Activated CD4-positive, alpha-beta T cell treated with anti-CD3 and anti-CD28 coated beads, Interleukin-2, amount 10 ng/mL, durations not matched to agents 7 days and 5 days (primary cell): ENCODE measurements at regions of chr14 and their contacts with region 1.

Region 1: GRCh38 chr14:34035177-34035933 is 84.5 kb upstream of the EGLN3 start:
- DNase-seq: no peak
- H3K4me3 Mint-ChIP-seq: no peak overlapping the region
- H3K27ac Mint-ChIP-seq: no peak overlapping the region
- H3K4me1 Mint-ChIP-seq: peaks cover 39% of the 10 kb centered on the region
- H3K27me3 Mint-ChIP-seq: peaks cover 25% of the 10 kb centered on the region

Region 2: GRCh38 chr14:33754265-33754664 is 281.1 kb before region 1 on chr14:
- CTCF ChIA-PET with region 1: no interaction called
- POLR2A ChIA-PET with region 1: no interaction called
- DNase-seq: no peak
- H3K4me3 Mint-ChIP-seq: no peak overlapping the region
- H3K27ac Mint-ChIP-seq: no peak overlapping the region
- H3K4me1 Mint-ChIP-seq: no peaks in the 10 kb centered on the region
- H3K27me3 Mint-ChIP-seq: peaks cover 6% of the 10 kb centered on the region

Region 3: DNA sequence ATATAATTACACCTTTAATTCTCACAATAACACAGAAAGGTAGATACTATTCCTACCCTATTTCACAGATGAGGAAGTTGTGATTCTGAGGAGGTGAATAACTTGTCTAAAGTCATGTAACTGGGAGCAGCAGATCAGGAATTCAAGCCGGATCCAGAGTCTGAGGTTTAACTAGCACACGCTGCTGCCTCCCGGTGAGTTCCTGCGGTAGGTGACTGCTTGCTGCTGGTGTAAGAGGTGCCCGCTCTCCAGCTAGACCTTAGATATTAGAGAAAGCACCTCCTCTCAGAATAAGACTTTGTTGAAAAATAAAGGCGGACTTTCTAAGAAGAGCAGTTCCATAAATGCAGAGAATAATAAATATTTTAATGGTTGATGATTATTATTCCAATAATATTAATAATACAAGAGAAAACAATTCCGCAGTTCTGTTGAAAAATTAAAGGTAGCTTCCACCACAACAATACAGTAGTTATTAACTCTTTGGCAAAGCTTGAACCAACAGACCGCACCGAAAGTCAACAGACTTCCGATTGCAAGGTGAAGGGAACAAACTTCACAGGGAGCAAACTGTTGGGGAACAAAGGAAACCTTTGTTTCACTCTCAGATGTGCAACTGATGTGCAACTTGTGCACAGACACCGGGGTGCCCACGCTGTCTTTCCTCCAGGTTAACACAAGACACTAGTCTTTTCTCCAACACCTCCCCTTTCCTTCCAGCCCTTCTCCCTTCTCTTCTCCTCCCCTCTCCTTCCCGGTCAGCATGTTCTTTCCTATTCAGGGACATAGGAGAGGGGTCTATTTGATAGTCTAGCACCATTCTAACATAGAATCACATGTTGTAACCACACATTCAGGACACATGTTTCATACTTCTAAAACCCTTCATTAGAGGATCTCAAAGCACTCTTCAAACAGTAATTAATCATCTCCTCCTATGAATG is 11.3 kb before region 1 on chr14:
- CTCF ChIA-PET with region 1: interaction called, 12 read pairs
- POLR2A ChIA-PET with region 1: no interaction called
- DNase-seq: no peak
- H3K4me3 Mint-ChIP-seq: no peak overlapping the region
- H3K27ac Mint-ChIP-seq: peak overlapping the region; percentile 51
- H3K4me1 Mint-ChIP-seq: peaks cover 9% of the 10 kb centered on the region
- H3K27me3 Mint-ChIP-seq: peaks cover 12% of the 10 kb centered on the region